Endothelial cell of umbilical vein (primary cell): ENCODE measurements at regions of chr1 and their contacts with region 1.

Region 1: DNA sequence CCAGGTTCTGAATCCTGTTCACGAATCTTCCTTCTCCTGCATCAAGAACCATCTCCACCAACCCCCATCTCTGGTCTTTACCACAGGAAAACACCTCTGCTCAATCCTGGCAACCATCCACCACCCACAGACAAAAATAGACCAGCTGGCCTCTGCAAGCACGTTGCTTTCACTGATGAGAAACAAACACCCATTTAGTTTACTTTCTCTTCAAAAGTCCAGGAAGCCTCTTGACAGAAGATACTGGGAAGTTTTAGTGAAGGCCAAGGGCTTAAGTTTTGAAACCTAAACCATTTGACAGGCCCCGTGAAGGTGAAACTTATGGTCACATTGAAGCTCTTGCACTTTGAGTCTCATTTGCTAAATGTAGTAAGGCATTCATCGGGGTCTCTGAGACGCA is 122.6 kb upstream of the PPP2R5A start:
- DNase-seq: peak; percentile 57
- H3K4me3 ChIP-seq: no peak overlapping the region
- H3K27ac ChIP-seq: no peak overlapping the region
- H3K4me1 ChIP-seq: peaks cover 29% of the 10 kb centered on the region
- H3K27me3 ChIP-seq: no peaks in the 10 kb centered on the region
- CTCF ChIP-seq: no peak
- POLR2A ChIP-seq: no peak

Region 2: DNA sequence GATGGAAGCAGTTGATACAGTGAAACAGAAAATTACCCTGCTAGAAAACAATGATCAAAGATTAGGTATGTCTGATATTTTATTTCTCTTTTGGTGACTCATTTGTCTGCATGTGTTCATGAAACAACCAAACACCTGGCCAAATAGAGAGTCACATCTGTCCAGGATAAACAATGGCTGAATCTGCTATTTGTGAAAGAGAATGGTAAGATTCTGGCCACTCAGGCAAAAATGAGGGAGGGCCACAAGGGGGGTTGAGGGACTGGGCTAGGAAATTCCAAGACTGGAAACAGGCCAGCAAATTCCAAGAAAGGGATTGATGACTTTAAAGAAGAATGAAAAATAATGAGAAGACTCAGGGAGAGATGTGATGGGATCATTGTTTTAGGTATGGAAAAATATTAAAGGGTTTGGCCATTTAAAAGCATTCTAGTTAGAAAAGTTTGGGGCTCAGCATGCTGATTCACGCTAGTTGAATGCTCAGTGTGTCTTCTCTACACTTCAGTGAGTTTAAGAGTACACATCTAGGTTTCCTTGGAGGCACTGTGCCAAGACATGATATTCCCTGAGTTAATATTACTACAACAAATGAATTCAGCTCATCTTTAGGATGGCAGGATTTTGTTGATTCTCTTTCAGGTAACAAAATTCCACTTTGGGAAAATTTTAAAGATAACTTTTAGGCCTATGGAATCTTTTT is 791.1 kb before region 1 on chr1:
- CTCF ChIA-PET with region 1: no interaction called
- POLR2A ChIA-PET with region 1: no interaction called
- dilution Hi-C with region 1: no loop called
- intact Hi-C with region 1: no loop called
- DNase-seq: peak; percentile 86
- H3K4me3 ChIP-seq: no peak overlapping the region
- H3K27ac ChIP-seq: peak overlapping the region; percentile 1
- H3K4me1 ChIP-seq: no peaks in the 10 kb centered on the region
- H3K27me3 ChIP-seq: no peaks in the 10 kb centered on the region
- CTCF ChIP-seq: no peak
- POLR2A ChIP-seq: no peak

Region 3: GRCh38 chr1:212089560-212090163 is 73.0 kb before region 1 on chr1:
- CTCF ChIA-PET with region 1: interaction called, 8 read pairs
- POLR2A ChIA-PET with region 1: interaction called, 3 read pairs
- dilution Hi-C with region 1: no loop called
- intact Hi-C with region 1: loop called (anchors 5 kb)
- DNase-seq: no peak
- H3K4me3 ChIP-seq: no peak overlapping the region
- H3K27ac ChIP-seq: no peak overlapping the region
- H3K4me1 ChIP-seq: peaks cover 7% of the 10 kb centered on the region
- H3K27me3 ChIP-seq: no peaks in the 10 kb centered on the region
- CTCF ChIP-seq: no peak
- POLR2A ChIP-seq: no peak

Region 4: GRCh38 chr1:212152308-212152693 is 10.3 kb before region 1 on chr1:
- CTCF ChIA-PET with region 1: interaction called, 12 read pairs
- POLR2A ChIA-PET with region 1: interaction called, 4 read pairs
- dilution Hi-C with region 1: no loop called
- intact Hi-C with region 1: loop called (anchors 2 kb)
- DNase-seq: peak; percentile 74
- H3K4me3 ChIP-seq: no peak overlapping the region
- H3K27ac ChIP-seq: no peak overlapping the region
- H3K4me1 ChIP-seq: peaks cover 10% of the 10 kb centered on the region
- H3K27me3 ChIP-seq: no peaks in the 10 kb centered on the region
- CTCF ChIP-seq: no peak
- POLR2A ChIP-seq: no peak

Region 5: GRCh38 chr1:212242288-212242984 is 79.8 kb after region 1 on chr1:
- CTCF ChIA-PET with region 1: no interaction called
- POLR2A ChIA-PET with region 1: no interaction called
- dilution Hi-C with region 1: no loop called
- intact Hi-C with region 1: loop called (anchors 2 kb)
- DNase-seq: peak; percentile 59
- H3K4me3 ChIP-seq: peak overlapping the region in 1 of 3 experiments; percentile 26
- H3K27ac ChIP-seq: peak overlapping the region; percentile 56
- H3K4me1 ChIP-seq: peaks cover 23% of the 10 kb centered on the region
- H3K27me3 ChIP-seq: no peaks in the 10 kb centered on the region
- CTCF ChIP-seq: no peak
- POLR2A ChIP-seq: no peak

Region 6: DNA sequence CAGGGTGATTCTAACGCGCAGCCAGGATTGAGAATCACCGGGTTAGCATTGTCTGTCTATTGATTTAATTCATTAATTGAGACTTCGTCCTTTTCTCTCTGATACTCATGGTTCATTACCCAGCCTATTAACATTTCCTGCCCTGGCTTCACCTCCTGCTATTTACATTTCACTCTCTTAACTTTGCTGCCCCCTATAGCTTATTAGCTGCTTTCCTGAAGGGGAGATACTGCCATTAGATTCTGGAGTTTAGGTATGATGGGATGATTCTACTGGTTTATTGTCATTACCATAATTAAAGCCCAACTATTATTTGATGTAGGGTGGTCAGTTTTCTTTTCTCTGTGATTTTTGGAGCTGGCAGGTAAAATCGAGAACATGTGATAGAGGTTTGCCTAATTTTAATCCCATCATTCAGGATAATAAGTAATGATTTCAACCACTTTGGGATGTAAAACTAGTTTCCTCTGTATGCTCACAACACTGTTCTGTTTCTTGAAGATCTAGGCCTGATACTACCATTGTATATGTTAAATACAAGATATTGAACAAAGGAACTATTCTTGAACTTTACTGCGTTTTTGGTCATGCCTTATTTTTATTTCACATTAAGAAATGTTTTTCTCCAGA is 129.0 kb after region 1 on chr1:
- CTCF ChIA-PET with region 1: no interaction called
- POLR2A ChIA-PET with region 1: no interaction called
- dilution Hi-C with region 1: no loop called
- intact Hi-C with region 1: loop called (anchors 1 kb)
- DNase-seq: peak; percentile 62
- H3K4me3 ChIP-seq: no peak overlapping the region
- H3K27ac ChIP-seq: no peak overlapping the region
- H3K4me1 ChIP-seq: peaks cover 27% of the 10 kb centered on the region
- H3K27me3 ChIP-seq: no peaks in the 10 kb centered on the region
- CTCF ChIP-seq: peak; percentile 53 to 54
- POLR2A ChIP-seq: no peak